ENCODE measurements at regions of chr10 and their contacts with region 1.

Region 1: GRCh38 chr10:89458291-89458690 is 43.9 kb downstream of the IFIT5 start:
- DNase-seq: no peak
- H3K4me3 ChIP-seq: no peak overlapping the region
- H3K27ac ChIP-seq: no peak overlapping the region
- H3K4me1 ChIP-seq: no peaks in the 10 kb centered on the region
- H3K27me3 ChIP-seq: no peaks in the 10 kb centered on the region
- CTCF ChIP-seq: no peak
- POLR2A ChIP-seq: no peak

Region 2: DNA sequence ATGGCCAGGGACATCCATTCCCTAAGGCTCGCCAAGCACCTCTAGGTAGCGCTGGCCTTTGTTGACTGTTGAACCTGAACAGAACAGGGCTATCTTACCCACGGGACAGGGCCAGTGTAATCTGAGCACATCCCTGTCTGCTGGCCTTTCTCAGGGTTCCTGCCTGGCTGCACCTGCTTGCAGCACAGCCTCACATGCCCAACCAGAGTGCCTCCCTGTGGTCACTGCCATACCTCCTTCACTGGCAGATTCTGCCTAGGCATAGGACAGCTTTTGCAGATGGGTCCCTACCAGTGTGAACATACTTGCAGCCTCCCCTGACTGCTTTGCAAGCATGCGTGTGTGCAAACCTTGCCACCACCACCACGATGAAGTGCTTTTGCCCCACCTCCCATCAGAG is 714.3 kb before region 1 on chr10:
- intact Hi-C with region 1: loop called (anchors 10 kb)
- DNase-seq: no peak
- H3K4me3 ChIP-seq: no peak overlapping the region
- H3K27ac ChIP-seq: no peak overlapping the region
- H3K4me1 ChIP-seq: no peaks in the 10 kb centered on the region
- H3K27me3 ChIP-seq: no peaks in the 10 kb centered on the region
- CTCF ChIP-seq: no peak
- POLR2A ChIP-seq: no peak

Region 3: GRCh38 chr10:89207181-89207800 is 251.0 kb before region 1 on chr10 and contains the start of gene CH25H:
- intact Hi-C with region 1: no loop called
- DNase-seq: peak; percentile 76 to 80
- H3K4me3 ChIP-seq: peak within 1 kb of the TSS; percentile 23 to 41
- H3K27ac ChIP-seq: peak within 1 kb of the TSS; percentile 49 to 60
- H3K4me1 ChIP-seq: no peaks in the 10 kb centered on the region
- H3K27me3 ChIP-seq: no peaks in the 10 kb centered on the region
- CTCF ChIP-seq: no peak
- POLR2A ChIP-seq: peak; percentile 58 to 59
- total RNA-seq, gene CH25H: 0.24 to 0.48 TPM in 2 of 4 donors, not detected in the others